Activated naive CD4-positive, alpha-beta T cell treated with anti-CD3 and anti-CD28 coated beads for 36 hours (primary cell): ENCODE measurements at regions of chr19 and their contacts with region 1.

Region 1: GRCh38 chr19:30227661-30228428 is 144.3 kb upstream of the ZNF536 start:
- DNase-seq: peak; percentile 70
- H3K4me3 Mint-ChIP-seq: peak overlapping the region; percentile 79
- H3K27ac Mint-ChIP-seq: no peak overlapping the region
- H3K4me1 Mint-ChIP-seq: peaks cover 33% of the 10 kb centered on the region
- H3K27me3 Mint-ChIP-seq: peaks cover 58% of the 10 kb centered on the region

Region 2: DNA sequence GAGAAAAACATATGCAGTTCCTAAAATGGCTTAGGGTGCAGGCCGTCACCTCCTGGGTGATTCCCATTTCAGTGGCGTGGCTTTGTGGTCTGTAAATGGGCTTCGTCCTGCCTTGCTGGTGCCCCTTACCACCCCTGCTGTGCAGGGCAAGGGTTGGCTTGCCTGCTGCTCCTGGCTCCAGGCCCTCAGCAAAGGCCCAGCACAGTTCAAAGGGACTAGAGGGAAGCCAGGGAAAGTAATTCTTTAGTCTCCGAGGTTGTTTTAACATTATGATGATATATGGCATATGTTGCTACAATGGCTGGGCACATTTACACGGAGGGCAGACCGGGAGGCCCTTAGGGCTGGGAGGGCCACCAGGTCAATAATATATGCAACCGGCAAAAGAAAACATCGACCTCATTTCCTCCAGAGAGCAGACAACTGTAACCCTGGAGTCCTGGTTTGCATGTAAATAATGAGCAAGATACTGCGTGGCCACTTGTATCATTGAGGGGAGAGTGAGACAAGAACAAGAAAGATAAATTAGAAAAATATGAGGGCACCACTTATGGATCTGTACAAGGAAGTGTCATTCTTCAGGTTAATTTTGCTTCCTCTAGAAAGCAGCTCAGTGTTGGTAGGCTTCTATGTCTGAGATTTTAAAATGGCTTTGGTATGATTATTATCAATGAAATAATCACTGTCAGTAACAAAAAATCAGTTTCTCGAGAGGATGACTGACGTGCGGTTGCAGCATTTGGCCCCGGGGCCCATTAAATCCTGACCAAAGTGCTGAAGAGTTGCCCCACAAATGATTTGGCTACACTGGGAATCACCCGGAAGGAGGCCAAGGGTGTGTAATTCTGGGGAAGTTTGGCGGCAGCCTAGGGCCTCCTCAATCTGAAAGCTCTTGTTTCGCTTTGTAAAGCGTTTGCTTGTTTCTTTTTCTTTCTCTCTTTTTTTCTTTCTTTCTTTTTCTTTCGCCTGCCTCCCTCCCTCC is 318.6 kb before region 1 on chr19:
- CTCF ChIA-PET with region 1: no interaction called
- intact Hi-C with region 1: no loop called
- DNase-seq: no peak
- H3K4me3 Mint-ChIP-seq: no peak overlapping the region
- H3K27ac Mint-ChIP-seq: no peak overlapping the region
- H3K4me1 Mint-ChIP-seq: no peaks in the 10 kb centered on the region
- H3K27me3 Mint-ChIP-seq: no peaks in the 10 kb centered on the region

Region 3: DNA sequence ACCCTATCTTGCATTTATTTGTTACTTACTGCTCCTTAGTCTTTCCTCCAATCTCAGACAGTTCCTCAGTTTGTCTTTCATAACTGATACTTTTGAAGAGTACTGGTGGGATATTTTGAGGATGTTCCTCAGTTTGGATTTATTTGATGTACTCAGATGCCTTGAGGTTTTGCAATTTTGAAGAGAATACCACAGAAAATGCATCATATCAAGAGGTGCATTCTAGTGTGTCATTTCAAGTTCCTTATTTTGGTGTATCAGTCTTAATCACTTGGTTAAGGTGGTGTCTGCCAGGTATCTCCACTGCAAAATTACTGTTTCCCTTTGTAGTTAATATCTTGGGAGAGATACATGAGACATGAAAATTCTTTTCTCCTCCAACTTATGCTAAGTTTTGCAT is 210.7 kb before region 1 on chr19:
- CTCF ChIA-PET with region 1: no interaction called
- intact Hi-C with region 1: no loop called
- DNase-seq: no peak
- H3K4me3 Mint-ChIP-seq: no peak overlapping the region
- H3K27ac Mint-ChIP-seq: no peak overlapping the region
- H3K4me1 Mint-ChIP-seq: peaks cover 2% of the 10 kb centered on the region
- H3K27me3 Mint-ChIP-seq: no peaks in the 10 kb centered on the region

Region 4: DNA sequence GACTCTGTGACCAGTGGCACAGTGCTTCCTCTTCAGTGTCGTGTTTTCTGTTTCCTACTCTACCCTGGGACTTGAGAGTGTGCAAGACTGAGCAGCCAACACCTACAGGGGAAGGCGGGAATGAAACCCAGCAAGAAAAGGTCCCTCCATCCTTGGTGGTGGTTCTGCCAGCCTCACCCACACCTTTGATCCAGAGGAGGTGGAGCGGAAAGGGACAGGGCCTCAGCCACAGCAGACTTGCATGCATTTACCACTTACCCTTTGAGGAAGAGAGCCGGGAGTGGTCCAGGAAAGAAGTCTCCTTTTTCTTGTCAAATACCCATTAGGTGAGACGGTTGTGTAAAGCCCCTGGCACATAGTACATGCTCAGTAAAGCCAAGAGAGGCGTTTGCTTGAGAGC is 20.5 kb before region 1 on chr19:
- CTCF ChIA-PET with region 1: no interaction called
- intact Hi-C with region 1: no loop called
- DNase-seq: no peak
- H3K4me3 Mint-ChIP-seq: no peak overlapping the region
- H3K27ac Mint-ChIP-seq: no peak overlapping the region
- H3K4me1 Mint-ChIP-seq: no peaks in the 10 kb centered on the region
- H3K27me3 Mint-ChIP-seq: peaks cover 12% of the 10 kb centered on the region

Region 5: GRCh38 chr19:30406220-30407067 is 178.6 kb after region 1 on chr19:
- CTCF ChIA-PET with region 1: no interaction called
- intact Hi-C with region 1: loop called (anchors 10 kb)
- DNase-seq: no peak
- H3K4me3 Mint-ChIP-seq: no peak overlapping the region
- H3K27ac Mint-ChIP-seq: no peak overlapping the region
- H3K4me1 Mint-ChIP-seq: no peaks in the 10 kb centered on the region
- H3K27me3 Mint-ChIP-seq: no peaks in the 10 kb centered on the region